ENCODE measurements at regions of chr19 and their contacts with region 1.

Region 1: DNA sequence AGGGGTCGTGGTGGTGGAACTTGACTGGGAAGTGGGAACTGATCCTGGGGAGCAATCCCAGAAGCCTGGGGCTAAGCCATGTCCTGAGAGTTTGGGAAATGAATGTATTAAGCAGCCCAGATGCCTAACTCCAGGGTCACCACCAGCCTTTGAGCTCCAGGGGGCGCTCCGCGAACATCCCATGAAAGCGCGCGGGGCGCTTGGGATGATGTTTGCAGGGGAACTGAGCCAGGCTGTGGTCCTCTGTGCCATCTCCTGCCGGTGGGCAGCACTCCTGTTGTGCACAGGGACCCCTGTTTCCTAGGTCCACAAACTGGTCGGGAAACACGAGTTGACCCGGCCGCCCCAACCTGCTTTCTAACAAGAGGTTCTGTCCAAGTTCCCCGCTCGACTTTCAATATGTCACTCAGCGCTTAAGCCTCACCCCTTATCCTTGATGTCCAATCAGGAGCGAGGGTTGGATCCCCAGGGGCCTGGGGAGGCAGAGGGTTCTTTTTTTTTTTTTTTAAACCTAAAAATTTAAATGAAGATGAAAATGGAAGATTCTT is 14.4 kb downstream of the LEUTX start:
- DNase-seq: peak; percentile 72 to 86 (median 76)
- ATAC-seq: peak; percentile 94 to 99 (median 98)
- H3K4me3 ChIP-seq: peak overlapping the region in 10 of 12 donors; percentile 30 to 79 (median 54)
- H3K27ac ChIP-seq: no peak overlapping the region
- H3K4me1 ChIP-seq: no peaks in the 10 kb centered on the region
- H3K27me3 ChIP-seq: peaks cover 0 to 9% (median 0%) of the 10 kb centered on the region in 9 donors
- CTCF ChIP-seq: peak; percentile 79 to 96 (median 90)
- POLR2A ChIP-seq: no peak

Region 2: DNA sequence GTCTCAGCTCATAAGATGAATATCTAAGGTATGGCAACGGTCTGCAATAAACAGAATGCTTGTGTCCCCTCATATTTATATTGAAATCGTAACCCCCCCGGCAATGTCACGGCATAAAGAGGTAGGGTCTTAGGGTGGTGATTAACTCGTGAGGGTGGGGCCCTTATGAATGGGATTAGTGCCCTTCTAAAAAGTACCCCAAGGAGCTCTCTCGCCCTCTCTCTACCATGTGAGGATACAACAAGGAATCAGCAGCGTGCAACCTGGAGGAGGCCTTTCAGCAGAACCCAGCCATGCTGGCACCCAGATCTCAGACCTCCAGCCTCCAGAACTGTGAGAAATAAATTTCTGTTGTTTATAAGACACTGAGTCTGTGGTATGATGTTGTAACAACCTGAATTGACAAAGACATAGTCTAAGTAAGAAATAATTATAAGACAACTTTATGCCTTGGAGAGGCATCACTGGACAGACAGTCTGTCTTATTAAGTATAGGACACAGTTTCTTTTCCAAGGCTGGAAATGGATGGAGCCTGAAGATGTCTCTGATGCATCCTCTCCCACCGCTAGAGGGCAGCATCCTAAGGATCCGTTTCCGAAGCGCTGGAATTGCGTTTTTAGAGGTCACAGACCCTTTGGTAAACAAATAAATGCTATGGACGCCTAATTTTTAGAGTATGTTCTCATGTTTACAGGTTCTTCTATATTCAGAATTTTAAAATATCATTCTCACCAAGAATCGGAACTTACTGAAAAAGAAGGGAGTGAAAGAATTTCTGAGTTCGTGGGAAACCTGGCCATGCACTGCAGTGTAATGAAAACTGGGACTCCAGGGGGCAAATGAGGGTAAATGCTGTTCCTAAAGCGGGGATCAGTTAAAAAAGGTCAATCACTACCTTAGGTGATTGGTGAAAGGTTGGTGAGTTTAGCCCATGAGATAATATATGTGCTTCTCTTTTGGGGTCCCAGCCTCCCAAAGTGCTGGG is 27.7 kb before region 1 on chr19:
- intact Hi-C with region 1: no loop called
- DNase-seq: peak in 3 of 5 donors; percentile 17 to 28 (median 21)
- ATAC-seq: no peak
- H3K4me3 ChIP-seq: no peak overlapping the region
- H3K27ac ChIP-seq: no peak overlapping the region
- H3K4me1 ChIP-seq: no peaks in the 10 kb centered on the region
- H3K27me3 ChIP-seq: peaks cover 0 to 10% (median 0%) of the 10 kb centered on the region in 9 donors
- CTCF ChIP-seq: peak; percentile 48 to 87 (median 66)
- POLR2A ChIP-seq: no peak

Region 3: GRCh38 chr19:39824143-39825092 is 31.3 kb after region 1 on chr19:
- intact Hi-C with region 1: loop called in 1 of 10 experiments (anchors 1 kb)
- DNase-seq: peak; percentile 87 to 93 (median 92)
- ATAC-seq: peak; percentile 93 to 98 (median 95)
- H3K4me3 ChIP-seq: peak overlapping the region; percentile 31 to 95 (median 72)
- H3K27ac ChIP-seq: peak overlapping the region in 11 of 12 donors; percentile 54 to 85 (median 78)
- H3K4me1 ChIP-seq: peaks cover 0 to 22% (median 8%) of the 10 kb centered on the region in 12 donors
- H3K27me3 ChIP-seq: no peaks in the 10 kb centered on the region
- CTCF ChIP-seq: no peak
- POLR2A ChIP-seq: peak; percentile 18 to 66

Region 4: GRCh38 chr19:40221858-40222837 is 429.1 kb after region 1 on chr19:
- intact Hi-C with region 1: loop called in 2 of 10 experiments (anchors 5 to 10 kb)
- DNase-seq: peak; percentile 74 to 88 (median 82)
- ATAC-seq: peak; percentile 70 to 90 (median 86)
- H3K4me3 ChIP-seq: no peak overlapping the region
- H3K27ac ChIP-seq: no peak overlapping the region
- H3K4me1 ChIP-seq: peaks cover 2 to 35% (median 11%) of the 10 kb centered on the region in 12 donors
- H3K27me3 ChIP-seq: peaks cover 23 to 72% (median 50%) of the 10 kb centered on the region in 9 donors
- CTCF ChIP-seq: peak; percentile 85 to 94 (median 90)
- POLR2A ChIP-seq: no peak

Measured in heart left ventricle (tissue), 16 donors.